ENCODE measurements at regions of chr17 and their contacts with region 1.

Region 1: GRCh38 chr17:29219378-29220047 is 27.1 kb upstream of the CRYBA1 start:
- DNase-seq: peak; percentile 86
- ATAC-seq: peak; percentile 97
- H3K4me3 Mint-ChIP-seq: no peak overlapping the region
- H3K27ac Mint-ChIP-seq: no peak overlapping the region
- H3K4me1 Mint-ChIP-seq: peaks cover 4% of the 10 kb centered on the region
- H3K27me3 Mint-ChIP-seq: no peaks in the 10 kb centered on the region
- CTCF ChIP-seq: peak; percentile 98

Region 2: GRCh38 chr17:29133146-29133713 is 86.3 kb before region 1 on chr17:
- CTCF ChIA-PET with region 1: interaction called, 17 read pairs
- POLR2A ChIA-PET with region 1: no interaction called
- intact Hi-C with region 1: no loop called
- DNase-seq: no peak
- ATAC-seq: peak; percentile 53
- H3K4me3 Mint-ChIP-seq: no peak overlapping the region
- H3K27ac Mint-ChIP-seq: peak overlapping the region; percentile 15
- H3K4me1 Mint-ChIP-seq: peaks cover 59% of the 10 kb centered on the region
- H3K27me3 Mint-ChIP-seq: no peaks in the 10 kb centered on the region
- CTCF ChIP-seq: no peak

Region 3: DNA sequence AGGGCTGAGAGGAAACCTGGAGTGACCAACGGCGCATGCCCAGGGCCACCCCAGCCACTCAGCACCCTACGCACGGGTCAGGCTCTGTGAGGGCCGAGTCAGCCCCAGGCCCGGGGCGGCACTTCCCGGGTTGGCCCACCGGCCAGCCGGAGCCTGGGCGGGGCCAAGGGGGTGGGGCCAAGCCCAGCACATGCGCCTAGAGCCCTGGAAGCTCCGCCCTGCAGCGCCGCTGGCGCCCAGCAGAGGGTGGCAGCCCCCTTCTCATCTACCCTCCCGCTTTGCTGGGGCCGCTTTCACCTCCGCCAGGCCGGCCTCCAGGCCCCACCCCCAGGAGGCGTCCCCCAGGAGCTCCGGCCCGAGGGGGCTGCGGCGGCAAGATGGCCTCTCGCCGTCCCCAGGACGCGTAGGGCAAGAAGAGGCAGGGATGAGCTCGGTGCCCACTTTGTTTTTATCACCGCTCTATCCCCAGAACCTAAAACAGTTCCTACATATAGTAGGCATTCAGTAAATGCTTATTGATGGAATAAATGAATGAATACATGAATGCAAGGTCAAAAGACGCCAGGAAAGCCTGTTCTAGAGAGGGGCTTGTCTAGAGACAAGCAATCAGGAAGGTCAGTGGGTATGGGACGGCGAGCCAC is 70.6 kb before region 1 on chr17:
- CTCF ChIA-PET with region 1: interaction called, 279 read pairs
- POLR2A ChIA-PET with region 1: interaction called, 4 read pairs
- intact Hi-C with region 1: loop called (anchors 2 kb)
- DNase-seq: peak; percentile 97
- ATAC-seq: peak; percentile 97
- H3K4me3 Mint-ChIP-seq: peak overlapping the region; percentile 72
- H3K27ac Mint-ChIP-seq: peak overlapping the region; percentile 87
- H3K4me1 Mint-ChIP-seq: peaks cover 54% of the 10 kb centered on the region
- H3K27me3 Mint-ChIP-seq: no peaks in the 10 kb centered on the region
- CTCF ChIP-seq: peak; percentile 93

Region 4: DNA sequence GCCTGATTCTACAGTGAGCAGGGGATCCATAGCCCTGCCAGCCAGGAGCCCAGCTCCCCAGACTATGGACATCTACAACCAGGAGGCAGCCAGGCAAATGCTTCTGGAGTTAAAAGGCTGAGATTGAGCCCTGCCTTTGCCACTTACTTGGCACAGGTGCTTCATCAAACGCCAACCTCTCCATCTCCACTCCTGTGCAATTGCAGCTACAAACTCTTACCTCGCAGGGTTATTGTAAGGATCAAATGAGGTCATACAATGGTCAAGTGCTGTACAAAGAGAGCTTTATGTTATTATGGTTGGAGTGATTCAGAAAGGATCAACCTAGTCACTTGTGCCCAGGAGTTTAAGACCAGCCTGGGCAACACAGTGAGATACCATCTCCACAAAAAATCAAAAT is 29.5 kb before region 1 on chr17:
- CTCF ChIA-PET with region 1: interaction called, 19 read pairs
- POLR2A ChIA-PET with region 1: no interaction called
- intact Hi-C with region 1: no loop called
- DNase-seq: no peak
- ATAC-seq: no peak
- H3K4me3 Mint-ChIP-seq: no peak overlapping the region
- H3K27ac Mint-ChIP-seq: no peak overlapping the region
- H3K4me1 Mint-ChIP-seq: peaks cover under 1% of the 10 kb centered on the region
- H3K27me3 Mint-ChIP-seq: peaks cover 7% of the 10 kb centered on the region
- CTCF ChIP-seq: no peak

Region 5: DNA sequence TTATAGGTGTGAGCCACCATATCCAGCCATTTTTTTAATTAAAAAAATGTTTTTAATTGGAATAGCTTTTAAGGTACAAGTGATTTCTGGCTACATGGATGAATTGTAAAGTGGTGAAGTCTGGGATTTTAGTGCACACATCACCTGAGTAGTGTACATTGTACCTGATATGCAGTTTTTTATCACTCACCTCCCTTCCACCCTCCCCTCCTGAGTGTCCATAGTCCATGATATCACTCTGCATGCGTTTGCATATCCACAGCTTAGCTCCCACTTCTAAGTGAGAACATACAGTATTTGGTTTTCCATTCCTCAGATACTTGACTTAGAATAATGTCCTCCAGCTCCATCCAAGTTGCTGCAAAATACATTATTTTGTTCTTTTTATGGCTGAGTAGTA is 13.8 kb after region 1 on chr17:
- CTCF ChIA-PET with region 1: interaction called, 15 read pairs
- POLR2A ChIA-PET with region 1: interaction called, 3 read pairs
- intact Hi-C with region 1: no loop called
- DNase-seq: no peak
- ATAC-seq: no peak
- H3K4me3 Mint-ChIP-seq: no peak overlapping the region
- H3K27ac Mint-ChIP-seq: no peak overlapping the region
- H3K4me1 Mint-ChIP-seq: no peaks in the 10 kb centered on the region
- H3K27me3 Mint-ChIP-seq: no peaks in the 10 kb centered on the region
- CTCF ChIP-seq: no peak

Region 6: GRCh38 chr17:29252101-29252866 is 32.8 kb after region 1 on chr17:
- CTCF ChIA-PET with region 1: interaction called, 21 read pairs
- POLR2A ChIA-PET with region 1: no interaction called
- intact Hi-C with region 1: no loop called
- DNase-seq: no peak
- ATAC-seq: no peak
- H3K4me3 Mint-ChIP-seq: no peak overlapping the region
- H3K27ac Mint-ChIP-seq: no peak overlapping the region
- H3K4me1 Mint-ChIP-seq: peaks cover 7% of the 10 kb centered on the region
- H3K27me3 Mint-ChIP-seq: no peaks in the 10 kb centered on the region
- CTCF ChIP-seq: peak; percentile 32